ENCODE measurements at regions of chr7 and their contacts with region 1.

Region 1: GRCh38 chr7:28083164-28083997 is 97.2 kb downstream of the JAZF1 start:
- H3K4me3 ChIP-seq: no peak overlapping the region
- H3K27ac ChIP-seq: no peak overlapping the region
- H3K4me1 ChIP-seq: peaks cover 15% of the 10 kb centered on the region
- CTCF ChIP-seq: no peak

Region 2: GRCh38 chr7:27825891-27826290 is 257.5 kb before region 1 on chr7:
- CTCF ChIA-PET with region 1: no interaction called
- POLR2A ChIA-PET with region 1: no interaction called
- H3K4me3 ChIP-seq: no peak overlapping the region
- H3K27ac ChIP-seq: no peak overlapping the region
- H3K4me1 ChIP-seq: no peaks in the 10 kb centered on the region
- CTCF ChIP-seq: no peak

Region 3: DNA sequence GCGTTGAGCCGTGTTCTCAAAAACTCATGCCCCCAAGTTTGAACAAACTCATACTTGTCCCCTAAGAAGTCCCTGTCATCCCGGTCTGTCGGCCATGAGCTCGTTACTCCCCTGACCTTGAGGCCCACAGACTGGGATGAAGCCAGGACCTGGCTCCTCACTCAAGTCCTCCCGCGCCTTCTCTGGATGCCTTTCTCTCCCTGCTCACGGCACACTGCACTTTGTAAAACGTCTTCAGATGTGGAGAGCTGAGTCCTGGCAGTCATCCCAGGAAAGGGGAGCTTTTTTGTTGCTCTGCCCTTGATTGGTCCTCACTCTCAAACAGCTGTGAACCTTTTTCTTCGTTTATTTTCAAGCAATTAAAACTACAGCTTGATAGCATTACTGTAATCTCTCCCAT is 13.6 kb before region 1 on chr7:
- CTCF ChIA-PET with region 1: interaction called, 82 read pairs
- POLR2A ChIA-PET with region 1: no interaction called
- H3K4me3 ChIP-seq: no peak overlapping the region
- H3K27ac ChIP-seq: no peak overlapping the region
- H3K4me1 ChIP-seq: no peaks in the 10 kb centered on the region; the same call in 1 of the 2 replicates
- CTCF ChIP-seq: no peak

Region 4: DNA sequence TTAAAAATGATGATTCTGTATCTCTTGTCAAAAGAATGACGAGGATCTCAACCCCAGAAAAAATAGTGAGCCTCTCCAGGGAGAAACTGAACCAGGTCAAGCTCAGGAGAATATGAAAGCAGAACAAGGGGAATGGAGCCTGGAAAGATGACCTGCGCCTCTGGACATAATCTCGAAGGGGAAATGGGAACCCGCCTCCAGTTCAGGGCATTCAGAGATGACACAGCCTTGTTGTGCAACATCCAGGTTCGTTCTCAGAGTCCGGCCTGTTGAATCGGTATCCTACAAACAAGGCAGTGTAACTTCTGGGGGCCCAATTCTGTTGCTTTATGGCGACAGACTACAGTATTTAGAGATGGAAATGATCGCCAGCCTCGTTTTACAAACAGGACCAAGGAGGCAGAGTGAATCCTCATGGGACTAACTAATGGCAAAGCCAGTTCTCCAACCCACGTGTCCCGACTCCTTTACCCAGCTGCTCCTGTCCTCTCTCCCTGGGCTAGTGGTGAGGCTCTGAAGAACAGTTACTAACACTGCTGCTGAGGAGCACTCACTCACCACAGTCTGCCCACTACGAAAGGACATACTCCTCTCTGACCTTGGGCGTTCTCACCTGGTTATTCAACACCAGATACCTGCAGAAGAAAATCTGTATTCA is 29.6 kb after region 1 on chr7:
- CTCF ChIA-PET with region 1: no interaction called
- POLR2A ChIA-PET with region 1: no interaction called
- H3K4me3 ChIP-seq: no peak overlapping the region
- H3K27ac ChIP-seq: peak overlapping the region; percentile 24; the same call in 1 of the 2 replicates
- H3K4me1 ChIP-seq: peaks cover 8% of the 10 kb centered on the region
- CTCF ChIP-seq: no peak

Region 5: GRCh38 chr7:28774261-28774988 is 691.0 kb after region 1 on chr7:
- CTCF ChIA-PET with region 1: no interaction called
- POLR2A ChIA-PET with region 1: no interaction called
- H3K4me3 ChIP-seq: no peak overlapping the region
- H3K27ac ChIP-seq: no peak overlapping the region
- H3K4me1 ChIP-seq: peaks cover 3% of the 10 kb centered on the region; the same call in 1 of the 2 replicates
- CTCF ChIP-seq: no peak

Measured in HEK293 (cell line).